Activated CD4-positive, alpha-beta T cell treated with anti-CD3 and anti-CD28 coated beads, Interleukin-2, amount 10 ng/mL, durations not matched to agents 24 days and 14 days (primary cell): ENCODE measurements at regions of chr10 and their contacts with region 1.

Region 1: GRCh38 chr10:83991986-83992753 is 147.1 kb upstream of the GHITM start:
- DNase-seq: peak; percentile 64
- H3K4me3 Mint-ChIP-seq: no peak overlapping the region
- H3K27ac Mint-ChIP-seq: no peak overlapping the region
- H3K4me1 Mint-ChIP-seq: no peaks in the 10 kb centered on the region
- H3K27me3 Mint-ChIP-seq: peaks cover 8% of the 10 kb centered on the region

Region 2: GRCh38 chr10:84008878-84009277 is 16.7 kb after region 1 on chr10:
- intact Hi-C with region 1: loop called (anchors 2 kb)
- DNase-seq: peak; percentile 76
- H3K4me3 Mint-ChIP-seq: no peak overlapping the region
- H3K27ac Mint-ChIP-seq: no peak overlapping the region
- H3K4me1 Mint-ChIP-seq: peaks cover 3% of the 10 kb centered on the region
- H3K27me3 Mint-ChIP-seq: peaks cover 8% of the 10 kb centered on the region